Breast epithelium (tissue), 4 donors: ENCODE measurements at regions of chr5 and their contacts with region 1.

Region 1: GRCh38 chr5:155125551-155126097 is 112.1 kb downstream of the KIF4B start:
- DNase-seq: no peak
- H3K4me3 ChIP-seq: no peak overlapping the region
- H3K27ac ChIP-seq: no peak overlapping the region
- H3K4me1 ChIP-seq: no peaks in the 10 kb centered on the region
- H3K27me3 ChIP-seq: no peaks in the 10 kb centered on the region
- CTCF ChIP-seq: no peak
- POLR2A ChIP-seq: no peak

Region 2: DNA sequence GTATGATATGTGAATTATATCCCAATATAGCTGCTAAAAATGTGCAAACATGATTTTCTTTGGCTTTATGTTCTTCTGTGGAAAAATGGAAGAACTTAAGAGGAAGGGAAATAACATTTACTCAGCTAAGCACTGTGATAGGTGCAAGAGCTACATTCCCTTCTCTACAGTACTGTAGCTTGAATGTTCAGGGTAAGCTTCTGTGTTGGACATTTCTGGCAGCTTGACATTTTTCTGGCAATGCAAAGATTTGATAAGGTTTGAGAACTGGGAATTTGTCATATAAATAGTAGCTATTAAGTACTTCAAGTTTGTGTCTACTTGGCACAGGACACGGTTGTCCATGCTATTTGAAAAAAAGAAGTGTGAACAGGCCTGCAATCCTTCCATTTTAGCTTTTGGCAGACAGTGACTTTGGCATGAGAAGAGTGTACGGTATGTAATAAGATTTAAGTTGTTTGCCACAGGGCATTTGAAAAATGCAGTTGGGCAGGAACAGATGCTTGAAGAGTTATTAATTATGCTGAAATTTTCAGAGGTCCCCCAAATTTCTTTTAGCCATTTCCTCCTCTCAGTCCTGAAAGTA is 34.5 kb before region 1 on chr5:
- intact Hi-C with region 1: loop called (anchors 1 kb)
- DNase-seq: no peak
- H3K4me3 ChIP-seq: no peak overlapping the region
- H3K27ac ChIP-seq: no peak overlapping the region
- H3K4me1 ChIP-seq: no peaks in the 10 kb centered on the region
- H3K27me3 ChIP-seq: no peaks in the 10 kb centered on the region
- CTCF ChIP-seq: no peak
- POLR2A ChIP-seq: no peak

Region 3: GRCh38 chr5:156383510-156384265 is 1258.1 kb after region 1 on chr5:
- intact Hi-C with region 1: no loop called
- DNase-seq: no peak
- H3K4me3 ChIP-seq: no peak overlapping the region
- H3K27ac ChIP-seq: no peak overlapping the region
- H3K4me1 ChIP-seq: no peaks in the 10 kb centered on the region
- H3K27me3 ChIP-seq: no peaks in the 10 kb centered on the region
- CTCF ChIP-seq: no peak
- POLR2A ChIP-seq: no peak